ENCODE measurements at regions of chr11 and their contacts with region 1.

Region 1: DNA sequence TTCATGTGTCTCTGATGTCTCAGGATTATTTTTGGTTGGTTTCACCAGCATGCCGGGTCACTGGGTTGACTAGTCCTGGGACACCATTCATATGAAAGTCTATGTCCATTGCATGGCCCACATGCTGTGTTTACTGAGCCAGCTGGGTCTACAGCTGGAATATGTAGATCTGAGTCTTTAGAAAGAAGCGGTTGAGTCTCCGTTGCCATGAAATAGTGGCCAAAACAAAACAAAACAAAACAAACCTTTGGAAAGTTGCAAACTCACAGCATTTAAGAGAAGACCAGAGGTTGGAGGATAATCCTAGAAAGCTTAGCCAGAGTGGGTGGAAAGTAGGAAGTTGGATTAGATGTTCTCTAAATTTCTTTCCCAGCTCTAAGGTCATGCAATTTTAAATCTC is 191.8 kb upstream of the NTM start:
- DNase-seq: no peak
- H3K4me3 ChIP-seq: no peak overlapping the region
- H3K27ac ChIP-seq: no peak overlapping the region
- H3K4me1 ChIP-seq: no peaks in the 10 kb centered on the region
- H3K27me3 ChIP-seq: no peaks in the 10 kb centered on the region
- CTCF ChIP-seq: no peak
- POLR2A ChIP-seq: no peak

Region 2: DNA sequence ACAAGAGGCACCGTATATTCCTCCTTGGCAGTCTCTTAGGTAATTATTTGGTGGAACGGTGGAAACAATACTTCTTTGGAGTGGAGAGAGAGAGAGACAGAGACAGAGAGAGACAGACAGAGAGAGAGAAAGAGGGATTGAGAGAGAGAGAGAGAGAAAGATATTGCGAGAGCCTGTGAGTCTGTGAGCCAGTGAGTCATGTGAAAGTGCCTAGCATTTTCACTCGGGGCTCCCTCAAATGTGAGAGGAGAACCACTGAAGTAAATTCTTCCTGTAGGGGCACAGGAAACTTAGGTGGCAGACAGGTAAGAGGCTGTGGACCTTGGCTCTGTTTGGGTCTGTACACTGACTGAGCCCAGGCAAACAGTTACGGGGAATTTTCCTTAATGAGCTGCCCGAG is 230.7 kb before region 1 on chr11:
- intact Hi-C with region 1: no loop called
- DNase-seq: no peak
- H3K4me3 ChIP-seq: no peak overlapping the region
- H3K27ac ChIP-seq: no peak overlapping the region
- H3K4me1 ChIP-seq: no peaks in the 10 kb centered on the region
- H3K27me3 ChIP-seq: no peaks in the 10 kb centered on the region
- CTCF ChIP-seq: no peak
- POLR2A ChIP-seq: no peak

Region 3: DNA sequence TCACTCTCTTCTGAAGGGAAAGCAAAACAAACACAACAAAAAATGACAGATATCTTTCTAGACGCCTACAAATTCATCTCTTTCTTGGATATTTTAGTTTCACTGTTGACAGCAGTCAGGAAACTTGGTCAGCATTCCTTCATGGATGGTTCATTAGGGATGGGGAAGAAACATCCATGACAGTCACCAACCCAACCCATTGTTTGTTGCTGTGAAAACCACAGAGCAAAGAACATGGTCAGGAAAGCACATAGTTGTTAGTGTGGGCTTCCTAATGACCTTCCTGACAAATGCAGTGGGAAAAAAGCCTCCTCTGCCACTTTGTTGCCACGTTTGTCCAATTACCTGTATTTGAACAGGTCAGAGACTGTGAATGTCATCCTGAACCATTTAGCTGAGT is 122.6 kb before region 1 on chr11:
- intact Hi-C with region 1: no loop called
- DNase-seq: no peak
- H3K4me3 ChIP-seq: no peak overlapping the region
- H3K27ac ChIP-seq: no peak overlapping the region
- H3K4me1 ChIP-seq: no peaks in the 10 kb centered on the region
- H3K27me3 ChIP-seq: no peaks in the 10 kb centered on the region
- CTCF ChIP-seq: no peak
- POLR2A ChIP-seq: no peak

Region 4: DNA sequence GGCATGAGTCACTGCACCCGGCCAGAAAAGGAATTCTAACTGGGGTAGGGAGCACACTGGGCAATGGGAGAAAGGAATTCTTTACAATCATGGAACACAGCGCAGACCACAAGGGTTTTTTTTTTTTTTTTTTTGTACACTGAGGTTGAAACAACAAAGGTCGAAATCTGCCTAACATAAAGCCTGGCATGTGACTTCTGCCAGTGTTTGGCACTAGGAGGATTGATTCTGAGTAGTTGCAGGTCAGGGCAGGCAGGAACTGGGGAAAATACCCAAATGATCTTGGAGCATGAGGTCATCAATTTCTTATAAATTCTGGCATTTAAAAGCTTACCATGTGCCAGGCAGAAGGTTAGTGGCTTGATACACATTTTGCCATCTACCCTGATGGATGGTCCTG is 60.3 kb before region 1 on chr11:
- intact Hi-C with region 1: loop called (anchors 10 kb)
- DNase-seq: no peak
- H3K4me3 ChIP-seq: no peak overlapping the region
- H3K27ac ChIP-seq: no peak overlapping the region
- H3K4me1 ChIP-seq: no peaks in the 10 kb centered on the region
- H3K27me3 ChIP-seq: no peaks in the 10 kb centered on the region
- CTCF ChIP-seq: no peak
- POLR2A ChIP-seq: no peak

Region 5: GRCh38 chr11:131792243-131792642 is 613.6 kb after region 1 on chr11:
- intact Hi-C with region 1: no loop called
- DNase-seq: no peak
- H3K4me3 ChIP-seq: no peak overlapping the region
- H3K27ac ChIP-seq: no peak overlapping the region
- H3K4me1 ChIP-seq: no peaks in the 10 kb centered on the region
- H3K27me3 ChIP-seq: no peaks in the 10 kb centered on the region
- CTCF ChIP-seq: no peak
- POLR2A ChIP-seq: no peak

Measured in prostate gland (tissue), 2 donors.